Activated naive CD4-positive, alpha-beta T cell treated with anti-CD3 and anti-CD28 coated beads, Interleukin-2, amount 10 ng/mL, durations not matched to agents 7 days and 5 days (primary cell): ENCODE measurements at regions of chr20 and their contacts with region 1.

Region 1: GRCh38 chr20:5100684-5101347 is 18.9 kb downstream of the PCNA start:
- DNase-seq: peak; percentile 83
- H3K4me3 Mint-ChIP-seq: no peak overlapping the region
- H3K27ac Mint-ChIP-seq: peak overlapping the region; percentile 62
- H3K4me1 Mint-ChIP-seq: peaks cover 8% of the 10 kb centered on the region
- H3K27me3 Mint-ChIP-seq: no peaks in the 10 kb centered on the region

Region 2: DNA sequence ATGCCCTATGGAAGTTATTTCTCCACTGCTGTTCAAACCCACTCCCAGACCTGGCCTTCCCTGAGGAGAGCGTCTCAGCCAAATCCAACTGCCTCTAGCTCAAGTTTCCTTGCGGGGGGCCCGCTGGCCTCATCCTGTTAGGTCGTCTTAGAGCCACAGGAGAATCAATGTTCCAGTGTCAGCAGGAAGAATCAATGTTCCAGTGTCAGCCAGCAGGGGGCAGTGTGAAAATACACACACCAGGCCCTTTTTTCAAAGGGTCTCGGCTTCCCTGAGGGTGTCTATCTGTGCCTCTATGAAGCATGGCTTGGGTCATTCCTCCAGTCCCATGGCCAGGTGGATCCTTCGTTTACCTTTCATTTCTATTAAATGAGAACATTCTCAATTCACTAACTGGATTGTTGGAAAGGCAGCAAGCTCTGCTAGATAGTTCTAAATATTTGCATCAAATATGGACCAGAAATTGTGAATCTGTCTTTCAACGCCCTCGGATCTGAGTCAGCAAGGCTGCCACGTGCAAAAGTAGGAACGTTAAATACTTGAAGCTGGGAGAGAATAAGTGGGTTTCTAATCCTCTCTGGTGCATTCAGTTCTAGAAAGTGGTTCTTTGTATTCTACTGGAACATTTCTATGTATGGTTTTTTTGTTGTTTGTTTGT is 359.9 kb before region 1 on chr20:
- CTCF ChIA-PET with region 1: interaction called, 11 read pairs
- DNase-seq: peak; percentile 76
- H3K4me3 Mint-ChIP-seq: no peak overlapping the region
- H3K27ac Mint-ChIP-seq: no peak overlapping the region
- H3K4me1 Mint-ChIP-seq: peaks cover 6% of the 10 kb centered on the region
- H3K27me3 Mint-ChIP-seq: peaks cover 19% of the 10 kb centered on the region

Region 3: DNA sequence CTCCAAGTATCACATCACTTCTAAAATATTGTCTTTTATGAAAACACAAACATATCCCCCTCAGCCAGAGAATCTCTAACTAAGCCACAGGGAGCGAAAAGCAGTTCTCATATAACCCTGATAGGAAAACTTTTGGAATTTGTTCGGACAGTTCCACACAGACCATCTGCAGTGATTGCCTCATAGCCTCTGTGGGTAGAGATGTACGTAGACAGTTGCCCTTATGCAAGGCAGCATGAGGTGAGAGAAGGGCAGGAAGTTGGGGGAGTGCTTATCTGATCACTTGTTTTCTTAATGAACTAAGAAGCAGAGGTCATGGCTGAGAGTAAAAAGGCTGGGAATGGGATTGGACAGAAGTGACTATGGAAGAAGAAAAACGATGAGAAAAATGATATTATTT is 139.1 kb before region 1 on chr20:
- CTCF ChIA-PET with region 1: interaction called, 11 read pairs
- DNase-seq: peak; percentile 41
- H3K4me3 Mint-ChIP-seq: peak overlapping the region; percentile 29
- H3K27ac Mint-ChIP-seq: peak overlapping the region; percentile 86
- H3K4me1 Mint-ChIP-seq: peaks cover 29% of the 10 kb centered on the region
- H3K27me3 Mint-ChIP-seq: no peaks in the 10 kb centered on the region

Region 4: DNA sequence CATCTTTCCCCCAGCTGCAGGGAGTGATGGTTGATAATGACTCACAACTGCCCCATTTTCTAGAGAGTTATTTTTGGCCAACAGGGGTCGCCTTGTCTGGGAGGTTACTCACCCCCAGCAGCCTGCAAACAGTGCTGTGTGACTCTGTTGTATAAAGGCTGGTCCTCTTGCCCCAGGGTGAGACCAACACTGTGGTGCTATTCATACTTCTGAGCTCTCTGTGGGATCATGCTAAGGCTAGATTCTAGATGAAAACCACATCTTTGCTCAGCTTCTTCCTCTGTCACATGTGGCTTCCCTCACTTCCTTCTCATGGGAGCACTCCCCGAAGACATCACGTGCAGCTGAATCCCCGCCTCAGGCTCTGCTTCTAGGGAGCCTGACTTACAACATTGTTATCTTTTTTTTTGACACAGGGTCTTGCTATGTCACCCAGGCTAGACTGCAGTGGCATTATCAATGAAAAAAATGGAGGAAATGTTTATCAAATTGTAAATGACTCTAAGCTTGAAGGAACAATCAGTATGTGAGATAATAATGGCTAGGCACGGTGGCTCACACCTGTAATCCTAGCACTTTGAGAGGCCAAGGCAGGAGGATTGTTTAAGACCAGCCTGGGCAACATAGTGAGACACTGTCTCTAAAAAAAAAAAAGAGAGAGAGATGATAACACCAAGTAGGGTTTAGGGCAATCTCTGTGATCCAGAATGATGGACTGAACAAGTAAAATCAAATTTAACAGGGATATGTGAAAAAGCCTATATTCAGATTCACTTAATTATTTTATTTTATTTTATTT is 43.8 kb before region 1 on chr20:
- CTCF ChIA-PET with region 1: interaction called, 56 read pairs
- DNase-seq: peak; percentile 84
- H3K4me3 Mint-ChIP-seq: no peak overlapping the region
- H3K27ac Mint-ChIP-seq: peak overlapping the region; percentile 88
- H3K4me1 Mint-ChIP-seq: peaks cover 36% of the 10 kb centered on the region
- H3K27me3 Mint-ChIP-seq: peaks cover 4% of the 10 kb centered on the region

Region 5: GRCh38 chr20:5078399-5078958 is 22.3 kb before region 1 on chr20:
- CTCF ChIA-PET with region 1: interaction called, 19 read pairs
- DNase-seq: peak; percentile 91
- H3K4me3 Mint-ChIP-seq: peak overlapping the region; percentile 57
- H3K27ac Mint-ChIP-seq: peak overlapping the region; percentile 99
- H3K4me1 Mint-ChIP-seq: peaks cover 62% of the 10 kb centered on the region
- H3K27me3 Mint-ChIP-seq: no peaks in the 10 kb centered on the region

Region 6: DNA sequence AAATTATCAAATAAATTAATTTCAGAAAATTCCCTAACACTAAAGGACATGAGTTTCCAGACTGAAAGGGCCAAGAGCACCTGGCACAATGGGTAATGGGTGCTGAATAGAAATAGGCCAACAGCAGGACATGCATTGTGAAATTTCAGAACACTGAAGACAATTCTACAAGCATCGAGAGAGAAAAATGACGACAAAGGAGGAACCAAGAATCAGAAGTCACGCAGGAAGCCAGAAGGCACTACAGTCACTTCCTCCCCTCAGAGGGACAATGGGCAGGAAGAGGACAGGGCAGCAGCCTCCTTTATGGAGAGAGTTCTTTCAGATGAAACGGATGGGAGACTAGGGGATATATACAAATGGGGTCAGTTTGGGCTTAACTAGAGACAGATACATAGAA is 10.6 kb before region 1 on chr20:
- CTCF ChIA-PET with region 1: interaction called, 20 read pairs
- DNase-seq: peak; percentile 38
- H3K4me3 Mint-ChIP-seq: no peak overlapping the region
- H3K27ac Mint-ChIP-seq: peak overlapping the region; percentile 80
- H3K4me1 Mint-ChIP-seq: peaks cover 28% of the 10 kb centered on the region
- H3K27me3 Mint-ChIP-seq: no peaks in the 10 kb centered on the region

Region 7: DNA sequence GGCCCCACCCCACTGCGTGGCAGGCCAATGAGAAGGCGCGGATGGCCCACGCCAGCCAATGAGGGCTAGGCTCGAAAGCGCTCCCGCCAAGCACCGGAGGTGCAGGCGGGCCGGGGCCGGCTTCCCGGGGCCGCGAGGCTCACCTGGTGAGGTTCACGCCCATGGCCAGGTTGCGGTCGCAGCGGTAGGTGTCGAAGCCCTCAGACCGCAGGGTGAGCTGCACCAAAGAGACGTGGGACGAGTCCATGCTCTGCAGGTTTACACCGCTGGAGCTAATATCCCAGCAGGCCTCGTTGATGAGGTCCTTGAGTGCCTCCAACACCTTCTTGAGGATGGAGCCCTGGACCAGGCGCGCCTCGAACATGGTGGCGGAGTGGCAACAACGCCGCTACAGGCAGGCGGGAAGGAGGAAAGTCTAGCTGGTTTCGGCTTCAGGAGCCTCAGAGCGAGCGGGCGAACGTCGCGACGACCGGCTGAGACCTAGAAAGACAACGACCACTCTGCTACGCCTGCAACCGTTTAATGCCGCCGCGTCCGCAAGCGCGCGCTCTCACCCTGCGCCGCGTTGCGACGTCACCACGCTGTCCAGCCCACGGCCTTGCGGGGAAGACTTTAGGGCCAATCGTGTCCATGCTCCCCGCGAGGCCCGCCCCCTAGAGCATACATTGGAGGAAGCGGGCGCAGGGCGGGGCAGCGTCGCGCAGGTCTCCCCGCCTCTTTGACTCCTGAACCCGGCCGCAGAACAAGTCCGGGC is 18.8 kb after region 1 on chr20 and contains the start of gene PCNA:
- CTCF ChIA-PET with region 1: interaction called, 11 read pairs
- DNase-seq: peak; percentile 99
- H3K4me3 Mint-ChIP-seq: peak within 1 kb of the TSS; percentile 97
- H3K27ac Mint-ChIP-seq: peak within 1 kb of the TSS; percentile 99
- H3K4me1 Mint-ChIP-seq: peaks cover 78% of the 10 kb centered on the region
- H3K27me3 Mint-ChIP-seq: peaks cover 3% of the 10 kb centered on the region

Region 8: DNA sequence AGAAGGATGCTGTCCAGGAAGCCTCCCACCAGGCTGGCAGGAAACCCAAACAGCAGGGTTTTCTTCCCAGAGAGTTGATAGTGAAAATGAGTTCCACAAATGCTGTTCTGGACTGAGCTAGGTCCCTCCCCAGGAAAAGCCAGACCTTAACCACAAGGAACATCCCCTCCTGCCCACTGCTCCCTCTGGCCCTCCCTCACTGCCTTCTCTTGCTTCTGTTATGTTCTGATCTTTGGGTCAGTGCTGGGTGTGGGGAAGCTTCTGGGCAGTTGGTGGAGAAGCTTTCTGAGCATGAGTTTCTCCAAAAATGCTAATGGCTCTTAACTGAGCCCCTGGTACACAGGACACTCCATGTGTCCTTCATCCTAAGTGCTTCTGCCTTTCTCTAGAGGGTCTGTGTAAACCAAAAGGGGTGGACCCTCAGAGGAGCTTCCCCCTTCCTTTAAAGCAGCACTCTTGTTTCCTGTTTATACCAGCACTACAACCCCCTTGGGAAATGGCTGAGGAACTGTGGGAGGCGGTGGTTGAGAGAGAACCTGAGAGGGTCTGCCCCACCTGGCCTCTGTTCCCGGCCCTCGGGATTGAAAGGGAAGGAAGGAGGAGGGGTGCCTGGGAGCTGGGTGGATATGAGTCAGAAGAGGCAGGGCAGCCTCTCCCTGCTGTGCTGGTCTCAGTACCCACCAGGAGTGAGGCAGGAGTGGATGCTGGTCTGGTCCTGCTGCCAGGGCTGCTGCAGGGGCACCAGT is 68.0 kb after region 1 on chr20:
- CTCF ChIA-PET with region 1: no interaction called
- DNase-seq: no peak
- H3K4me3 Mint-ChIP-seq: no peak overlapping the region
- H3K27ac Mint-ChIP-seq: peak overlapping the region; percentile 85
- H3K4me1 Mint-ChIP-seq: peaks cover 46% of the 10 kb centered on the region
- H3K27me3 Mint-ChIP-seq: no peaks in the 10 kb centered on the region